Endothelial cell of umbilical vein (primary cell): ENCODE measurements at regions of chr15 and their contacts with region 1.

Region 1: GRCh38 chr15:66700802-66701421 is 1.1 kb upstream of the SMAD6 start:
- DNase-seq: peak; percentile 94
- H3K4me3 ChIP-seq: peak overlapping the region; percentile 8 to 79 (median 46)
- H3K27ac ChIP-seq: peak overlapping the region; percentile 92
- H3K4me1 ChIP-seq: peaks cover 28% of the 10 kb centered on the region
- H3K27me3 ChIP-seq: no peaks in the 10 kb centered on the region
- CTCF ChIP-seq: no peak
- POLR2A ChIP-seq: peak; percentile 48

Region 2: GRCh38 chr15:65927545-65927944 is 773.4 kb before region 1 on chr15:
- CTCF ChIA-PET with region 1: no interaction called
- POLR2A ChIA-PET with region 1: no interaction called
- dilution Hi-C with region 1: no loop called
- intact Hi-C with region 1: no loop called
- DNase-seq: no peak
- H3K4me3 ChIP-seq: no peak overlapping the region
- H3K27ac ChIP-seq: no peak overlapping the region
- H3K4me1 ChIP-seq: no peaks in the 10 kb centered on the region
- H3K27me3 ChIP-seq: no peaks in the 10 kb centered on the region
- CTCF ChIP-seq: no peak
- POLR2A ChIP-seq: no peak

Region 3: GRCh38 chr15:66603301-66604179 is 97.4 kb before region 1 on chr15:
- CTCF ChIA-PET with region 1: interaction called, 60 read pairs
- POLR2A ChIA-PET with region 1: no interaction called
- dilution Hi-C with region 1: no loop called
- intact Hi-C with region 1: loop called (anchors 1 kb)
- DNase-seq: peak; percentile 65
- H3K4me3 ChIP-seq: no peak overlapping the region
- H3K27ac ChIP-seq: no peak overlapping the region
- H3K4me1 ChIP-seq: no peaks in the 10 kb centered on the region
- H3K27me3 ChIP-seq: no peaks in the 10 kb centered on the region
- CTCF ChIP-seq: peak; percentile 75 to 93
- POLR2A ChIP-seq: no peak

Region 4: DNA sequence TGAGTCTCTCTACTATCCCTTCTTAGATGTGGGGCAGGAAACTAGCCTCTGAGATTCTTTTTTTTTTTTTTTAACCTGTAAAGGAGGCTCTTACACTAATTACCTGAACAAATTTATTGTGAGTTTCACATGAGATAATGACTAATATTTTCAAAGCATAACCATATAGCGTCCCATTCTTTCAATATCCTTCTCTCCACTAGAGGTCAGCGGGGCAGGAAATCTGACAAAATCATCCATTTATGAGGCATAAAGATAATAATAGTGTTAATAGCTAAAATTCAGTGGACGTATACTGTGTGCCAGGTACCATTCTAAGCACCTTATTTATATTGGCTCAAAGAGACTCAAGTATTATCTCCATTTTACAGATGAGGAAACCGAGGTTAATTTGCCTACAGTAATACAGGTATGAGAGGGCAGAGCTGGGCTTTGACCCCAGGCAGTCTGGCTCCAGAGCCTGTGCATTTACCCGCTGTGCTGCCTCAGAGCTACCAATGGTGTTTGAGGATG is 15.2 kb before region 1 on chr15:
- CTCF ChIA-PET with region 1: interaction called, 10 read pairs
- POLR2A ChIA-PET with region 1: no interaction called
- dilution Hi-C with region 1: no loop called
- intact Hi-C with region 1: no loop called
- DNase-seq: peak; percentile 44
- H3K4me3 ChIP-seq: no peak overlapping the region
- H3K27ac ChIP-seq: no peak overlapping the region
- H3K4me1 ChIP-seq: peaks cover 7% of the 10 kb centered on the region
- H3K27me3 ChIP-seq: no peaks in the 10 kb centered on the region
- CTCF ChIP-seq: no peak
- POLR2A ChIP-seq: no peak

Region 5: DNA sequence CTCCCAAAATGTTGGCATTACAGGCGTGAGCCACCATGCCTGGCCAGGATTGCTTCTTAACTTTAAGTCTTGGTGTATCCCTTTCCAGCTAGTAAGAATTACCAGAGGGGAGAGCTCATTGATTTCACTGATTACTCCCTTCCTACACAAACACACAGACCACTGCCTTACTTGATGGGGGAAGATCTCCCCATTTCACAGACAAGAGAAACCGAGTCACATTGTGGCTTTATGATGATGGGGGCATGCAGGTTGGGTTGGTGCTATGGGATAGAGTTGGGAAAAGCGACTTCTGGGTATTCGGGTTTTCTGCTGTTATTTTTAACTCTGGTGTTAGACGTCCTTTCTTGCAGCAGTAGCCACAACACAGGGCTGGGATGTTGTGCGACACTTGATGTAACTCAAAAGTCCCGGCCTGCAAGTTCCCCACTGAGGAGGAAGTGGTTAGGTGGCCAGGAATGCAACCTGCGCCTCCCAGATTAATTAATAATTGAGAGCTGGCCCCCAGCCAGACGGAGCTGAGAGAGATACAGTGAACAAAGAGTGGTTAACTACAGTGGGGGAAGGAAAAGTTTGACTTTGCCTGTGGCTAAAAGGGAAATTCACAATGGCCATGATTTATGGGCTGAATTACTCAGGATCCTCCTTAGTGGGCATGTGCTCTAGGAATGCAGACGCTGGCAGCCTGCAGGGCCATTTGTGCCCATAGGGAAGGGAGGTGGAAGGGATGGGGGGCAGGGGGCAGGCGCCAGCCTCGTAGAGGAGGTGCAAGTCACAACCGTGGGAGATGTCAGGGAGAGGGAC is 64.8 kb after region 1 on chr15:
- CTCF ChIA-PET with region 1: interaction called, 118 read pairs
- POLR2A ChIA-PET with region 1: no interaction called
- dilution Hi-C with region 1: no loop called
- intact Hi-C with region 1: loop called (anchors 1 kb)
- DNase-seq: peak; percentile 93
- H3K4me3 ChIP-seq: no peak overlapping the region
- H3K27ac ChIP-seq: peak overlapping the region; percentile 84
- H3K4me1 ChIP-seq: peaks cover 66% of the 10 kb centered on the region
- H3K27me3 ChIP-seq: no peaks in the 10 kb centered on the region
- CTCF ChIP-seq: no peak
- POLR2A ChIP-seq: peak; percentile 30

Region 6: GRCh38 chr15:66803182-66803729 is 102.3 kb after region 1 on chr15:
- CTCF ChIA-PET with region 1: no interaction called
- POLR2A ChIA-PET with region 1: no interaction called
- dilution Hi-C with region 1: no loop called
- intact Hi-C with region 1: loop called (anchors 1 kb)
- DNase-seq: peak; percentile 98
- H3K4me3 ChIP-seq: no peak overlapping the region
- H3K27ac ChIP-seq: peak overlapping the region; percentile 97
- H3K4me1 ChIP-seq: peaks cover 31% of the 10 kb centered on the region
- H3K27me3 ChIP-seq: no peaks in the 10 kb centered on the region
- CTCF ChIP-seq: no peak
- POLR2A ChIP-seq: peak; percentile 27